ENCODE measurements at regions of chr18 and their contacts with region 1.

Region 1: DNA sequence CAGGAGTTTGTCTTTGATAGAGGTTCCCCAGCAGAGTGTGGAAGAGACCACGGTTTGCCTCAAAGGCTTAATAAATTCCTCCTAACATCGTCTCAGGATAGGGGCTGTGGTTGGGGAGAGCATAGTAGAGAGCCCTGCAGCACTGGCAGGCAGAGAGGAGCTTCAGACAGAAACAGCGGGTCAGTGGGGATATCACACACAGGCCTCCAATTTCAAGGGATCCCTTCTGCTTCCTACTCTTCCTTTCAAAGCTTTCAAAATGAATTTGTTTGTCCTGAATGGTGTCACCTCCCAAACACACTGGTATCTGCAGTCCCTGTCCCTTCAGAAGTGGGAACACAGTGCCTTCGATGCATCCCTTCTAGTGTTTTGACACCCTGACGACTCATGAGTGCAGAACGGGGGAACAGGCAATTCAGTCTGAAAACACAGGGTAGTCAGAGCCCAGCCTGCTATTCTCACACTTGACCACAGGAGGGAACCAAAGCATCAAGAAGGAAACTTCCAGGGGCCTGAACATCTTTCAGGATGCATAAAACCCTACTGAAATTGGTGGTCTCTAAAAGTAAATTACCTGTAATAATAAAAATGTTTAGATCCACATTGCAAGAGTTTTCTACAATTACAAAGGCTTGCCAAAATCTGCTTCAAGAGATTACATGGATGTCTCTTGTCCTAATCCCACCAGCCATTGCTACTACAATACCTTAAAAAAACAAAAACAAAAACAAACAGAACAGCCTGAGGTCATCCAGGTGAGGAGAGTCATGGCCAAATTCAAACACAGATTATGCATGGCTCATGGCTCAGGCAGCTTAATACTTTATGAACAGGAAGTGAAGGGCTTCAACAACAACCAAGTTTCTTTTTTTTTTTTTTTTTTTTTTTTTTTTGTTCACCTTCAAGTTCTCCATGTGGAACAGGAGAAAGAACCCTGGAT is 49.8 kb downstream of the SLC14A2 start:
- DNase-seq: peak; percentile 76
- H3K4me3 Mint-ChIP-seq: no peak overlapping the region
- H3K27ac Mint-ChIP-seq: peak overlapping the region; percentile 43
- H3K4me1 Mint-ChIP-seq: peaks cover 51% of the 10 kb centered on the region
- H3K27me3 Mint-ChIP-seq: no peaks in the 10 kb centered on the region

Region 2: DNA sequence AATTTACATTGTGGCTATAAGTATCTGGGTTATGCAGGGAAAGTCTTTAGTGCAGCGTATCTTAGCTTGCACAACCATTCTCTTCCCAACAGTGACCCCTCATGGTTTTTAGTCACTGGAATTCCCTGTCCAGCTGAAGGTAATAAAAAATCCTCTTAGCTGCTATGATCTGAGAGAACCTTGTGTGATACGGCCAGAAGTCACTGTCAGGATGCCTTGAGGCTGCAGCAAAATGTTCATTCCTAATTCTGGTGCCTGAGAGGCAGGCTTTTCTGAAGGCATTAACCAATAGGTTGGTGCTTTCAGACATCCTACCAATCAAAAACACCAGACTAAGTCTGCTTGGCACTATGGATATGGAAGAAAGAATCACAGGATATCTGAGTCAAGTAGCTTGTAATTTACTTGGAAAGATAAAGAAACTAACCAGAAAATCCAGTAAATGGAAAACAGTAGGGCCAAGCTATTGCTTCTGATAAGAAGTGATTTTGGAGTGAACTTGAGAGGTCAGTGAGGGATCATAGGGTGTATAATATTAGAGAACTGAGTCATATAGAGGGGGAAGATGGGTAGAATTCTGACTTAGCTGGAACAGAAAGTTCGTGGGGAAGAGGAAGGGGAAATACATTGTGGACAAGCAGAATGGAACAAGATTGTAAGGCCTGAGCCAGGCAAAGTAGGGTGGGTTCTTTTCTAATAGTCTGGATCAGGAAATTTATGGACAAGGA is 138.8 kb before region 1 on chr18:
- CTCF ChIA-PET with region 1: no interaction called
- POLR2A ChIA-PET with region 1: no interaction called
- intact Hi-C with region 1: no loop called
- DNase-seq: no peak
- H3K4me3 Mint-ChIP-seq: no peak overlapping the region
- H3K27ac Mint-ChIP-seq: no peak overlapping the region
- H3K4me1 Mint-ChIP-seq: no peaks in the 10 kb centered on the region
- H3K27me3 Mint-ChIP-seq: peaks cover 1% of the 10 kb centered on the region

Region 3: DNA sequence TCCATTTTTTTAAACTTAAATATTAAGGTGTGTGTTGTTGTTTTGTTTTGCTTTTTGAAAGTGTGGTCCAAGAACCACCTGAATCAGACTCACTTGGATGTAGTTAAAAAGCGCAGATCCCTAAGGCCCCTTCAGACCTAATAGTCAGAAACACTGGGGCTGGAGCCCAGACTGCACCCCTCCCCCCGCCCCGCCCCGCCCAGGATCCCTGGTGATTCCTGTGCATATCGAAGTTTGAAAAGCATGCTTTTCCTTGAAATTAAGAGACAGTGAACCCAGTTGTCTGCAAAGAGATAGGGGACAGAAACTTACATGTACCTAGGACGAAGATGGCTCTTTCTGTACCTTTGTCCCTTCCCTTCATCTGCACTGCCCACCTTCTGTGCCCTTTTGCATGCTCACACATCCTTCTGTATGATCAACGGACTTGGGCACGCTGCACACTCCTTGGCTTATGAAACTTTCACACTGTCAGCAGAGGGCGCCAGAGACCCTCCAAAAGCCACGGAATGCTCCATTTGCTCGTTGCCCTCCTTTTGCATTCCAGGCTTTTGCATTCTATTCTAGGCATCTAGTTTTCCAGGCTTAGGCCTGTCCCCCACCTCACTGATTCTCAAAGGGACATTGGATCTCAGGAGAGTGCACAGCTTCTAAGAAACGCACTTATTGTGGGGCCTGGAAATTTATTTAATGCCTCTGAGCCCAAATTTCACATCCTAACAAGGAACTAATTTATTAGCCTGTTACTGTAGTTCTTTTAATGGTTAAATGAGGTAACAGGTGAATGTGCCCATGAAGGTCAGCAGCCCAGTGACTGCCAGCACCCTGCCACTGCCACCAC is 26.1 kb after region 1 on chr18:
- CTCF ChIA-PET with region 1: interaction called, 76 read pairs
- POLR2A ChIA-PET with region 1: interaction called, 5 read pairs
- intact Hi-C with region 1: loop called (anchors 1 kb)
- DNase-seq: peak; percentile 84
- H3K4me3 Mint-ChIP-seq: no peak overlapping the region
- H3K27ac Mint-ChIP-seq: no peak overlapping the region
- H3K4me1 Mint-ChIP-seq: peaks cover 42% of the 10 kb centered on the region
- H3K27me3 Mint-ChIP-seq: peaks cover 6% of the 10 kb centered on the region

Region 4: GRCh38 chr18:45722899-45723298 is 57.8 kb after region 1 on chr18:
- CTCF ChIA-PET with region 1: interaction called, 26 read pairs
- POLR2A ChIA-PET with region 1: no interaction called
- intact Hi-C with region 1: loop called (anchors 2 kb)
- DNase-seq: peak; percentile 85
- H3K4me3 Mint-ChIP-seq: no peak overlapping the region
- H3K27ac Mint-ChIP-seq: no peak overlapping the region
- H3K4me1 Mint-ChIP-seq: no peaks in the 10 kb centered on the region
- H3K27me3 Mint-ChIP-seq: no peaks in the 10 kb centered on the region

Region 5: GRCh38 chr18:45802608-45803492 is 137.8 kb after region 1 on chr18:
- CTCF ChIA-PET with region 1: interaction called, 9 read pairs
- POLR2A ChIA-PET with region 1: no interaction called
- intact Hi-C with region 1: loop called (anchors 10 kb)
- DNase-seq: peak; percentile 52
- H3K4me3 Mint-ChIP-seq: no peak overlapping the region
- H3K27ac Mint-ChIP-seq: no peak overlapping the region
- H3K4me1 Mint-ChIP-seq: peaks cover 8% of the 10 kb centered on the region
- H3K27me3 Mint-ChIP-seq: peaks cover 7% of the 10 kb centered on the region

Region 6: DNA sequence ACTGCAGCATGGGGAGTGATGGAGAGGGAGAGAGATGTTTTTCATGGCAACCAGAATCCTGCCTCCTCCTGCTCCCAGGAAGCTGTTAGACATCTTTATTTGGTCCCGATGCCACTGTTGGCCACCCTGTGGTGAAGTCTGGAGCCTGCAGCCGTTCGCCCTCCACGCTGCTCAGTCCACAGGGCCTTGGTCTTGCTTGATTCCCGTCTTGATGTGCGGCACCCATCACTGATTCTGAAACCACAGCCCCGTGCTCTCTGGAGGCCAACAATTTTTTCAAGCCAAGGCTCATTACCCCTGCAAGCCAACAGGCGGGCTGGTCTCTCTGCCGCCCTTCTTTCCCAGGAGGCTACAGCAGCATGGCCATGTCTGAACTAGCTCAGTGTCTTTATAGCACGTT is 184.9 kb after region 1 on chr18:
- CTCF ChIA-PET with region 1: interaction called, 10 read pairs
- POLR2A ChIA-PET with region 1: no interaction called
- intact Hi-C with region 1: no loop called
- DNase-seq: no peak
- H3K4me3 Mint-ChIP-seq: no peak overlapping the region
- H3K27ac Mint-ChIP-seq: no peak overlapping the region
- H3K4me1 Mint-ChIP-seq: no peaks in the 10 kb centered on the region
- H3K27me3 Mint-ChIP-seq: no peaks in the 10 kb centered on the region

Region 7: GRCh38 chr18:45879681-45880655 is 214.9 kb after region 1 on chr18:
- CTCF ChIA-PET with region 1: interaction called, 199 read pairs
- POLR2A ChIA-PET with region 1: no interaction called
- intact Hi-C with region 1: loop called (anchors 1 kb)
- DNase-seq: peak; percentile 81
- H3K4me3 Mint-ChIP-seq: no peak overlapping the region
- H3K27ac Mint-ChIP-seq: no peak overlapping the region
- H3K4me1 Mint-ChIP-seq: peaks cover 14% of the 10 kb centered on the region
- H3K27me3 Mint-ChIP-seq: no peaks in the 10 kb centered on the region

Region 8: GRCh38 chr18:45974088-45974536 is 309.0 kb after region 1 on chr18:
- CTCF ChIA-PET with region 1: interaction called, 7 read pairs
- POLR2A ChIA-PET with region 1: no interaction called
- intact Hi-C with region 1: loop called (anchors 1 kb)
- DNase-seq: peak; percentile 83
- H3K4me3 Mint-ChIP-seq: no peak overlapping the region
- H3K27ac Mint-ChIP-seq: peak overlapping the region; percentile 78
- H3K4me1 Mint-ChIP-seq: peaks cover 5% of the 10 kb centered on the region
- H3K27me3 Mint-ChIP-seq: no peaks in the 10 kb centered on the region